Right ventricle myocardium inferior (tissue), 1 donor: ENCODE measurements at regions of chr6 and their contacts with region 1.

Region 1: GRCh38 chr6:3887150-3887700 is 38.1 kb downstream of the FAM50B start:
- DNase-seq: no peak
- ATAC-seq: peak; percentile 3

Region 2: DNA sequence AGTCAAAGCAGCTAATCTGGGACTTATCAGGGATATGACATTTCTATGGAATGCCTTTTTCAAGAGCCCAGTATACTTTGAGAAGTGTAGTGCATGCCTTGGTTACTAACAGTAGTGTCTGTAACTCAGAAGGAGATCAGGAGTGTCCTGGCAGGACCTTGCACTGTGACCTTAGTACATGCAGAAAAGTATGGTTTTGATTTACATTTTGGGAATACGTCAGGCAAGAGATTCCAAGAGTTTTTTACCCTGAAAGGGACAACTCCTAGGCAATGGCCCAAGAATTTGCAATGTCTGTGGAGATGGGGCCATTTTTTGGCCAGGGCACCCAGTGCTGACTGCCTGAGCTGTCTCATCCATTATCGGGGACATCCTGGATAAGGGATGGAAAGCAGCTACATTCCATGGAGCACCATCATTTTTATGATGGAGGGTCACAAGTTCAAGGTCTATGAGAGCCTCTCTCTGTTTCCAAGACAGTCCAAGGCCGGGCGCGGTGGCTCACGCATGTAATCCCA is 42.1 kb after region 1 on chr6:
- intact Hi-C with region 1: loop called (anchors 1 kb)
- DNase-seq: no peak
- ATAC-seq: no peak